Ovary (tissue), 10 donors: ENCODE measurements at regions of chr3 and their contacts with region 1.

Region 1: GRCh38 chr3:58008140-58009025 is at the start of gene FLNB:
- DNase-seq: peak; percentile 73 to 88 (median 85)
- H3K4me3 ChIP-seq: peak within 1 kb of the TSS; percentile 79
- H3K27ac ChIP-seq: peak within 1 kb of the TSS; percentile 9 to 13
- H3K4me1 ChIP-seq: peaks cover 20% of the 10 kb centered on the region
- H3K27me3 ChIP-seq: no peaks in the 10 kb centered on the region
- CTCF ChIP-seq: peak; percentile 36 to 85 (median 80)
- EP300 ChIP-seq: no peak
- POLR2A ChIP-seq: peak; percentile 49
- total RNA-seq, gene FLNB: 51.9 to 141 (median 126) TPM

Region 2: GRCh38 chr3:58101499-58102389 is 93.4 kb after region 1 on chr3:
- intact Hi-C with region 1: loop called in 2 of 4 experiments (anchors 10 kb)
- DNase-seq: no peak
- H3K4me3 ChIP-seq: no peak overlapping the region
- H3K27ac ChIP-seq: peak overlapping the region; percentile 27 to 85
- H3K4me1 ChIP-seq: peaks cover 17% of the 10 kb centered on the region
- H3K27me3 ChIP-seq: no peaks in the 10 kb centered on the region
- CTCF ChIP-seq: no peak
- EP300 ChIP-seq: no peak
- POLR2A ChIP-seq: no peak

Region 3: GRCh38 chr3:58167431-58168351 is 159.3 kb after region 1 on chr3:
- intact Hi-C with region 1: loop called in 2 of 4 experiments (anchors 2 to 5 kb)
- DNase-seq: peak; percentile 68 to 87 (median 79)
- H3K4me3 ChIP-seq: no peak overlapping the region
- H3K27ac ChIP-seq: peak overlapping the region in 1 of 2 donors; percentile 12
- H3K4me1 ChIP-seq: peaks cover 32% of the 10 kb centered on the region
- H3K27me3 ChIP-seq: no peaks in the 10 kb centered on the region
- CTCF ChIP-seq: peak; percentile 42 to 57 (median 52)
- EP300 ChIP-seq: no peak
- POLR2A ChIP-seq: no peak

Region 4: GRCh38 chr3:58177747-58178527 is 169.6 kb after region 1 on chr3:
- intact Hi-C with region 1: loop called in 2 of 4 experiments (anchors 5 kb)
- DNase-seq: peak; percentile 90 to 96 (median 95)
- H3K4me3 ChIP-seq: peak overlapping the region; percentile 44
- H3K27ac ChIP-seq: no peak overlapping the region
- H3K4me1 ChIP-seq: peaks cover 10% of the 10 kb centered on the region
- H3K27me3 ChIP-seq: no peaks in the 10 kb centered on the region
- CTCF ChIP-seq: peak; percentile 88 to 94 (median 92)
- EP300 ChIP-seq: no peak
- POLR2A ChIP-seq: no peak